ENCODE measurements at regions of chr17 and their contacts with region 1.

Region 1: GRCh38 chr17:60599620-60600489 is at the start of gene PPM1D:
- DNase-seq: peak; percentile 99 to 100
- ATAC-seq: peak; percentile 84 to 92
- H3K4me3 ChIP-seq: peak within 1 kb of the TSS; percentile 88
- H3K27ac ChIP-seq: peak within 1 kb of the TSS; percentile 86 to 89
- H3K4me1 ChIP-seq: peaks cover 24% of the 10 kb centered on the region
- CTCF ChIP-seq: no peak
- EP300 ChIP-seq: no peak
- POLR2A ChIP-seq: peak; percentile 78
- RAD21 ChIP-seq: peak in 1 of 2 experiments; percentile 14; a peak in 1 of 5 replicates
- polyA plus RNA-seq, gene PPM1D: 10.5 and 11.6 TPM in 2 replicates

Region 2: GRCh38 chr17:60571551-60571950 is 28.3 kb before region 1 on chr17:
- CTCF ChIA-PET with region 1: interaction called, 22 read pairs
- POLR2A ChIA-PET with region 1: interaction called, 3 read pairs
- DNase-seq: no peak
- ATAC-seq: 0 out of 6 replicates have a peak, but pooled peaks of 1 of the 2 experiments have one; percentile 49
- H3K4me3 ChIP-seq: no peak overlapping the region
- H3K27ac ChIP-seq: no peak overlapping the region
- H3K4me1 ChIP-seq: no peaks in the 10 kb centered on the region
- CTCF ChIP-seq: no peak
- EP300 ChIP-seq: no peak
- POLR2A ChIP-seq: no peak
- RAD21 ChIP-seq: no peak

Region 3: GRCh38 chr17:60586288-60586974 is 13.4 kb before region 1 on chr17:
- CTCF ChIA-PET with region 1: interaction called, 11 read pairs
- POLR2A ChIA-PET with region 1: interaction called, 13 read pairs
- DNase-seq: peak in 1 of 2 experiments; percentile 51
- ATAC-seq: peak; percentile 82 to 87; a peak in 5 of 6 replicates
- H3K4me3 ChIP-seq: no peak overlapping the region
- H3K27ac ChIP-seq: no peak overlapping the region
- H3K4me1 ChIP-seq: no peaks in the 10 kb centered on the region
- CTCF ChIP-seq: peak; percentile 55
- EP300 ChIP-seq: no peak
- POLR2A ChIP-seq: no peak
- RAD21 ChIP-seq: peak; percentile 48 to 58

Region 4: DNA sequence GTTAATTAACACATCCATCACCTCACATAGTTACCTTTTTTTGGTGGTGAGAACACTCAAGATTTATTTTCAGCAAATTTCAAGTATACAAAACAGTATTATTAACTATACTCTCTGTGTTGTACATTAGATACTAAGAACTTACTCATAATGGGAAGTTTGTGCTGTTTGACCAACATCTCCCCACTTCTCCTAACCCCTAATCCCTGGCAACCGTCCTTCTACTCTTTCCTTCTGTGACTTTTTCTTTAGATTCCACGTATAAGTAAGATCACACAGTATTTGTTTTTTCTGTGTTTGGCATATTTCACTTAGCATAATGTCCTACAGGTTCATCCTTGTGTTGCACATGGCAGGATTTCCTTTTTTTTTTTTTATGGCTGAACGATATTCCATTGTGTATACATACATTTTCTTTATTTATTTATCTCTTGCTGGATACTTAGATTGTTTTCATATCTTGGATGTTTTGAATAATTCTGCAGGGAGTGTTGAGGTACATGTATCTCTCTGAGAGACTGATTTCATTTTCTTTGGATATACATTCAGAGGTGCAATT is 19.1 kb after region 1 on chr17:
- CTCF ChIA-PET with region 1: interaction called, 12 read pairs
- POLR2A ChIA-PET with region 1: interaction called, 4 read pairs
- DNase-seq: no peak
- ATAC-seq: no peak; a peak in 1 of 6 replicates
- H3K4me3 ChIP-seq: no peak overlapping the region
- H3K27ac ChIP-seq: no peak overlapping the region
- H3K4me1 ChIP-seq: peaks cover 14% of the 10 kb centered on the region
- CTCF ChIP-seq: no peak
- EP300 ChIP-seq: no peak
- POLR2A ChIP-seq: no peak
- RAD21 ChIP-seq: no peak